ENCODE measurements at regions of chr9 and their contacts with region 1.

Region 1: GRCh38 chr9:35489313-35490154 is at the start of gene RUSC2:
- DNase-seq: peak; percentile 74
- H3K4me3 ChIP-seq: peak within 1 kb of the TSS; percentile 77
- H3K27ac ChIP-seq: peak within 1 kb of the TSS; percentile 82
- H3K4me1 ChIP-seq: no peaks in the 10 kb centered on the region
- H3K27me3 ChIP-seq: no peaks in the 10 kb centered on the region
- CTCF ChIP-seq: no peak
- total RNA-seq, gene RUSC2: 4.7 to 8.6 TPM

Region 2: DNA sequence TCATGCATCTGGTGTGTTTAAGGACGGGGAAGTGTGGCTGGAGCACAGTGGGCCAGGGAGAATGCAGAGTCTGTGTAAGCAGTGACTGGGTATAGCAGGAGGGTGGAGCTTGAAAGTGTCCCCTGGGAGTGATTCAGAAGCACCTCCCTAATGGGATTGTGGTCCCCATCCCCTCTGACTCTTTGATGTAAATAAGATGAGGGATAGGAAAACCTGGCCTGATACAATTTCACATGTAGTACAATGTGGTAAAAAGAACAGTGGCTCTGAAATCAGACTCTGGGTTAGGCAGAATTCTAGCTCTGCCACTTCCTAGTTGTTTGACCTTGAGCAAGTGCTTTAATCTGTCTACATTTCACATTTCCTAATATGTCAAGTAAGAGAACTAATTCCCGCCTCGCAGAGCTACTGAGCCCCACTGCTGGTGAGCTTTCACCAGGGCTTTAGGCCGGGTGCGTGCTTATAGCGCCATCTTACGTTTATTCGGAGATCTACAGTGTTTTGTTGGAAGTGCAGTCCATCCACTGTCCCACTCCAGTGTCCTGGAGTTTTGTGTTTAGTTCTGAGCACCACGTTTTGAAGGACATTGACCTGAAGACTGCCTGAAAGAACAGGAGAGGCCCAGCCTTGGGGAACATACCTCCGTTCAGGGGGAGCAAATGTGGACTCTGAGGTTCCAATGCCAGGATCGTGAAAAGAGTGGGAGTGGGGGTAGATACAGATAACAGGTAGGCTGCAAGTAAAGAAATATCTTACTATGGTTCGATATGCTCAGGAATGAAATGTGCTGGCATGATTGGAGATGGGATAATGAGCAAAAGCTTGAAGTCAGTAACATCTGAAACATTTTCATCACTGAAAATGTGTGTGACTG is 64.4 kb after region 1 on chr9:
- intact Hi-C with region 1: loop called (anchors 5 kb)
- DNase-seq: peak; percentile 68
- H3K4me3 ChIP-seq: no peak overlapping the region
- H3K27ac ChIP-seq: peak overlapping the region; percentile 37
- H3K4me1 ChIP-seq: no peaks in the 10 kb centered on the region
- H3K27me3 ChIP-seq: no peaks in the 10 kb centered on the region
- CTCF ChIP-seq: peak; percentile 61

Measured in colonic mucosa (tissue), 4 donors.